ENCODE measurements at regions of chr5 and their contacts with region 1.

Region 1: GRCh38 chr5:175489693-175490443 is 11.5 kb downstream of the SFXN1 start:
- DNase-seq: no peak
- H3K4me3 Mint-ChIP-seq: no peak overlapping the region
- H3K27ac Mint-ChIP-seq: peak overlapping the region; percentile 69
- H3K4me1 Mint-ChIP-seq: peaks cover 63% of the 10 kb centered on the region
- H3K27me3 Mint-ChIP-seq: no peaks in the 10 kb centered on the region

Region 2: GRCh38 chr5:175288048-175288621 is 201.7 kb before region 1 on chr5:
- CTCF ChIA-PET with region 1: no interaction called
- POLR2A ChIA-PET with region 1: no interaction called
- DNase-seq: no peak
- H3K4me3 Mint-ChIP-seq: no peak overlapping the region
- H3K27ac Mint-ChIP-seq: no peak overlapping the region
- H3K4me1 Mint-ChIP-seq: no peaks in the 10 kb centered on the region
- H3K27me3 Mint-ChIP-seq: peaks cover 2% of the 10 kb centered on the region

Region 3: DNA sequence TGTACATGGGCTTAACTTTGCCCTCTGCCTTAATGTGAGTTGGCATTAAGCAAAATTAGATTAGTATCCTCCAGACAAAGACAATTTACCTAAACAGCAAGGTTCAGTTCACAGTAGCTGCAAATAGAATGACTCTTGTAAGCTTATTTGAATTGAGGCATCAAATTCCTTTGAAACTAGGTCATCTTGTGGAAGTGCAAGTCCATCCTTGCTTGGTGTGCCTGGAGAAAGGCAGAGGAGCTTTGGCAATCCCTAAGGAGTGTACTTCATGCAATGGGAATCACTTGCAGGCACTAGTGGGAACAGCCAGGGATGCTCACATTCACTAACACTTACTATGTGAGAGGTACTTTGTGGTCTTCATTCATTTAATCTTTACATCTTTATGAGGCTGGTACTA is 164.2 kb before region 1 on chr5:
- CTCF ChIA-PET with region 1: no interaction called
- POLR2A ChIA-PET with region 1: no interaction called
- DNase-seq: no peak
- H3K4me3 Mint-ChIP-seq: no peak overlapping the region
- H3K27ac Mint-ChIP-seq: no peak overlapping the region
- H3K4me1 Mint-ChIP-seq: no peaks in the 10 kb centered on the region
- H3K27me3 Mint-ChIP-seq: no peaks in the 10 kb centered on the region

Region 4: GRCh38 chr5:175478384-175479124 is 11.3 kb before region 1 on chr5 and contains the start of gene SFXN1:
- CTCF ChIA-PET with region 1: interaction called, 10 read pairs
- POLR2A ChIA-PET with region 1: no interaction called
- DNase-seq: peak; percentile 78
- H3K4me3 Mint-ChIP-seq: peak within 1 kb of the TSS; percentile 88
- H3K27ac Mint-ChIP-seq: peak within 1 kb of the TSS; percentile 93
- H3K4me1 Mint-ChIP-seq: peaks cover 42% of the 10 kb centered on the region
- H3K27me3 Mint-ChIP-seq: peaks cover 18% of the 10 kb centered on the region
- total RNA-seq, gene SFXN1: 149 to 163 TPM

Measured in activated CD4-positive, alpha-beta T cell treated with anti-CD3 and anti-CD28 coated beads, Interleukin-2, amount 10 ng/mL, durations not matched to agents 7 days and 5 days (primary cell).